K562 (cell line): ENCODE measurements at regions of chr3 and their contacts with region 1.

Region 1: GRCh38 chr3:66567077-66567476 is 66.3 kb upstream of the LRIG1 start:
- DNase-seq: no peak
- ATAC-seq: no peak
- H3K4me3 ChIP-seq: no peak overlapping the region
- H3K27ac ChIP-seq: no peak overlapping the region
- H3K4me1 ChIP-seq: no peaks in the 10 kb centered on the region
- H3K27me3 ChIP-seq: no peaks in the 10 kb centered on the region
- CTCF ChIP-seq: no peak
- EP300 ChIP-seq: no peak
- POLR2A ChIP-seq: no peak
- RAD21 ChIP-seq: no peak

Region 2: DNA sequence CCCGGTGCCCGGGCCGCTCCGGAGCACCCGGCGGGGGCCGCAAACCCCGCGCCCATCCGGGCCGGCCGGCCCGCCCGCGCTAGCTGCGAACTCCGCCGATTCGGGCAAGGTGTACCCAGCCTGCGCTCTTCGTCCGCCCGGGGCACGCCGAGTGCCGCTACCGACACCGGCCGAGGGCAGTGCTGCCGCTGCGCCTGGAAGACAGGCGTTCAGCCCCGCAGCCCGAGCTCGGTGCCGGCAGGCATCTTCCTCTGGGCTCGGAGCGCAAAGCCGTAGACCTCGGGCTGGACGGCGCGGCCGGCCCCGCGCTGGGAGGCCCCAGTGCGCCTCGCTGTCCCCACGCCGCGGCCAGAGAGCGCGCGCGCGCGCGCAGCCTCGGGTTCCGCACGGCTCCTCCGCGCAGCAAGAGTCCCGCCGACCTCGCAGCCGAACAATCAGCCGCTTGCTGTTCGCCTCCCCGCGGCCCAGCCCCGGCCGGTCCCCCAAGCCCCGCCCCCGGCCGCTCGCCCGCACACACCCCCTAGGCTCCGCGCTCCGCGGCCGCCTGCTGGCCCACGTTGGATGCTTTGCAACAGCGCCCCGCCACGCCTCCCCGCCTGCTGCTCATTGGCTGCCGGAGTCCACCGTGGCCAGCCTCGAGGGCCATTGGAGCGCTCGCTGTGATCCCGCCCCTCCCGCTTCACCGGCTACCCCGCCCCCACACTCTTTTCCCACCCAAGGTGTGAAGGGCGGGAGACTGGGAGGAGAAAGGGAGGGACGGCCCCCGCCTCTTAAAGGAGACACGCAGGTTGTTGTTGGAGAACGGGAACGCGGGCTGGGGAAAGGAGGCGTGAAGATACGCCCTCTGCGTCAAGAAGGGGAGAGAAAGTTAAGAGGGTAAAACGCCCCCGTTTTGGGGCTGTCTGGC is 66.2 kb before region 1 on chr3 and contains the start of gene LRIG1:
- CTCF ChIA-PET with region 1: no interaction called
- POLR2A ChIA-PET with region 1: no interaction called
- in situ Hi-C with region 1: no loop called
- intact Hi-C with region 1: loop called (anchors 10 kb)
- DNase-seq: peak; percentile 92 to 96 (median 94)
- ATAC-seq: peak; percentile 100
- H3K4me3 ChIP-seq: peak within 1 kb of the TSS; percentile 33; the same call in 1 of the 2 replicates
- H3K27ac ChIP-seq: no peak within 1 kb of the TSS
- H3K4me1 ChIP-seq: peaks cover 0 to 10% of the 10 kb centered on the region in 2 experiments; a peak in 2 of 5 replicates
- H3K27me3 ChIP-seq: no peaks in the 10 kb centered on the region; a peak in 1 of 5 replicates
- CTCF ChIP-seq: peak in 1 of 3 experiments; percentile 40; a peak in 2 of 6 replicates
- EP300 ChIP-seq: no peak
- POLR2A ChIP-seq: no peak
- RAD21 ChIP-seq: no peak
- polyA plus RNA-seq, gene LRIG1: 0.06 to 0.18 TPM

Region 3: GRCh38 chr3:66898155-66898554 is 331.1 kb after region 1 on chr3:
- CTCF ChIA-PET with region 1: no interaction called
- POLR2A ChIA-PET with region 1: no interaction called
- in situ Hi-C with region 1: no loop called
- intact Hi-C with region 1: no loop called
- DNase-seq: no peak
- ATAC-seq: no peak
- H3K4me3 ChIP-seq: no peak overlapping the region
- H3K27ac ChIP-seq: no peak overlapping the region
- H3K4me1 ChIP-seq: no peaks in the 10 kb centered on the region
- H3K27me3 ChIP-seq: no peaks in the 10 kb centered on the region
- CTCF ChIP-seq: no peak
- EP300 ChIP-seq: no peak
- POLR2A ChIP-seq: no peak
- RAD21 ChIP-seq: no peak